WTC11 (cell line): ENCODE measurements at regions of chr11 and their contacts with region 1.

Region 1: DNA sequence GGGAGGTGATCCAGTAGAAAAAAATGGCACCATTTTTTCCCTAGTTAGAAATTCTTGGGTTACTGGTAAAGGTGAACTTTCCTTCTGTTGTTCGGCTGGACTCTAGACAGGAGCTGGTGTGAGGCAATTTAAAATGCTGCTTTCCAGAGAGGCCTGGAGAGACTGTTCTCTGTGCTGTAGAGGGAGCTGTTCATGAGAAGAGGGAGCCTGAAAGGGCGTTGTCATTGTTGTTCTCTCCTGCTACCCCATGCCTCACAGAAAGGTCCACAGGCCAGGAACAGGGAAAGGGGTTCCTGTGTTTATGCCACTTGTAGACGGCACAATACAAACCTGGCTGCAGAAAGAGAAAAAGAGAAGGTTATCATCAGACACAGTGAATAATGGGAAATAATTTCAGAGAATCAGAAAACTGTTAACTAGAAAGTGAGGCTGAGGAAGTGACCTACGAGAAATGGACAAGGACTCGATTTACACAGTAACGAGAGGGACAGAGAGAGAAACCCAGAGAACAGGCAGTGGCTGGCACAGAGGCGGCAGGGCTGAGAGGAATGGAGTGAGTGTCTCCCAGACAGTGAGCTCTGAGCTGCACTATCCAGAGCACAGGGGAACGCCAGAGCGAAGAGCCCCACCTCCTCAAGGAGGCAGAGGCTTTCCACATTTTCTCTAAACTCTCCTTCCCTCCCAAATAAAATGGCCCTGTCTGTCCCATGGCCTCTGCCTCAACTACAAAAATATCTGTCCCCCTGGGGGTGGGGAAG is 109.2 kb downstream of the RRM1 start:
- DNase-seq: no peak
- ATAC-seq: peak; percentile 100
- H3K4me3 Mint-ChIP-seq: no peak overlapping the region
- H3K27ac Mint-ChIP-seq: no peak overlapping the region
- H3K4me1 Mint-ChIP-seq: peaks cover 4% of the 10 kb centered on the region
- H3K27me3 Mint-ChIP-seq: no peaks in the 10 kb centered on the region
- CTCF ChIP-seq: peak; percentile 17; the same call in 1 of the 2 replicates

Region 2: DNA sequence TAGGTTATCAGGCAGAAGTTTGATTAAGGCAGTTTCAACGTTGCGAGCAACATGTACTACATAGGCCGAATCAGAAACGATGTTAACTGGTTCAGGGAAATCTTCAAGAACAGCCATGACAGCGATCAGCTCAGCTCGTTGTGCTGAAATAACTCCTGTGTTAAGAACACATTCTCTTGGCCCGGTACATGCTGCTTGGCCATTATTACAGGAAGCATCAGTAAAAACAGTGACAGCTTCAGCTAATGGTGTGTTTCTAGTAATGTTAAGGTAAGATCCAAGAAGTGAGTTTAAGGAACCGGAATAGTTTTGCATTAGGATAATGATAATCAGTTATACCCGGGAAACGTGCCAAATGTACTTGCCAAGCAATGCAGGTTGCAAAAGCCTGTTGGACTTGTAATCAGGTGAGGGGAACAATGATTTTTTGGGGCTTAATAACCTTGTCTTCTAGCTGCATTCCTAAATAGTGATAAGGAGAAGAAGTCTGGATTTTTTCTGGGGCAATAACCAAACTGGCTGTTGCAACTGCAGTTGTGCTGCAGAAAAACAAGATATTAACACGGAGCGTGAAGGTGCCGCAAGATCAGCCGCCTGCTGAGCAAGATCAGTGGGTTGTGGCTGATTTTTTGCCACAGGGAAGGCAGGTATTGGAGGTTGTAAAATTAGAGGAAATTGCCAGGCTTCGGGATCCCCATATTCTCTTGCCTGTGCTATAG is 292.9 kb after region 1 on chr11:
- CTCF ChIA-PET with region 1: interaction called, 10 read pairs
- POLR2A ChIA-PET with region 1: no interaction called
- DNase-seq: no peak
- ATAC-seq: no peak
- H3K4me3 Mint-ChIP-seq: no peak overlapping the region
- H3K27ac Mint-ChIP-seq: no peak overlapping the region
- H3K4me1 Mint-ChIP-seq: peaks cover 6% of the 10 kb centered on the region
- H3K27me3 Mint-ChIP-seq: no peaks in the 10 kb centered on the region
- CTCF ChIP-seq: no peak